Motor neuron (in vitro differentiated cells): ENCODE measurements at regions of chr2 and their contacts with region 1.

Region 1: DNA sequence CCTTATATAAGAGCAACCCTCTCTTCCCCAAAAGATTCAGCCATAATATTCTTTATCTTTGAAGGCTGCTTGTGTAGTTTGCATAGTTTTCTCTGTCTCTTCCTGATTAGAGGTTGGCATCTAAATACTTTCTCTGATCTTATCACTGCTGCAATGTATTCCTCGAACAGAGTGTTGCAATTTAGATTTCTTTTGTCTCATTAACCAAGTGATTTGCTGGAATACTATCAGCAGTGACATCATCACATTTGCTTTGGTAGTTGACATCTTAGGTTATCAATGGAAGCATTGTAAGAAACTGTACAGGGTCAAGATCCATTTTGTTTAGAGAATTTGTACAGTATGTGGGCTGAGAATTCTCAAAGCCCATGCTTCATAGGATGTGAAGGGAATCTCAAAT is 72.0 kb upstream of the NEUROD1 start:
- ATAC-seq: no peak
- H3K4me3 ChIP-seq: no peak overlapping the region
- H3K27ac ChIP-seq: no peak overlapping the region
- H3K4me1 ChIP-seq: peaks cover 5 to 7% of the 10 kb centered on the region in 2 donors

Region 2: DNA sequence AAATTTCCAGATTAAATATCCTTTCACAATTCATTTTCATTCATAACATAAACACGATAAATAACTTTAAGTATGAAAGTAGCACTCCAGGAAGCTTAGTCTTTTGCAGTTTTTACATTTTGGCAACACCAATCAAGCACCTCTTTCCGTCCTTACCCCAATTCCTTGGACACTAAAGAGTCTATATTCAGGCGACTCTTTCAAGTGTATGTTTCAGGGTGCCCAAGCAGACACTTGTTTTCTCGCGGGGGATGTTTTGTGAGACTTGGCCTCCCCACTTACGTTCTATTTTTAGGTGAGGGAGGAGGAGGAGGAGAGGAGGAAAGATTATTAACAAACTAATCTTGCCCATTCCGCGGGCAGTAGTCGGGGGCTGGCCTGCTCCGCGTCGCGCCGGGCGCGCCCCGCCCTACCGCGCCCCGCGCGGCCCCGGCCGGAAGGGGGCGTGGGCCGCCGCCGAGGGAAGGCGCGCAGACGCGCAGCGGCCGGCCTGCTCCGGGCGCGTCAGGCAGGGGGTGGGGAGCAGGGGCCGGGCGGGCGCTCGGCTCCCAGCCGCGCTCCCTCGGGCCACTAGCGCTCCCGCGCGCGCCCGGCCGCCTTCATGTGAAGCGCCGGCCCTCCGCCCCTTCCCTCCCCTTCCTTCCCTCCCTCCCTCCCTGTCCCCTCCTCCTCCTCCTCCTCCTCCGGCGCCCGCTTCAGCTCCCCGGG is 139.1 kb after region 1 on chr2 and contains the start of gene ITPRID2:
- in situ Hi-C with region 1: loop called in 2 of 9 experiments (anchors 10 to 25 kb)
- ATAC-seq: peak; percentile 87 to 93 (median 91)
- H3K4me3 ChIP-seq: peak within 1 kb of the TSS; percentile 67 to 88 (median 78)
- H3K27ac ChIP-seq: peak within 1 kb of the TSS; percentile 77 to 86
- H3K4me1 ChIP-seq: peaks cover 0 to 13% of the 10 kb centered on the region in 2 donors
- total RNA-seq, gene ITPRID2: 27.2 to 113 (median 35.9) TPM

Region 3: DNA sequence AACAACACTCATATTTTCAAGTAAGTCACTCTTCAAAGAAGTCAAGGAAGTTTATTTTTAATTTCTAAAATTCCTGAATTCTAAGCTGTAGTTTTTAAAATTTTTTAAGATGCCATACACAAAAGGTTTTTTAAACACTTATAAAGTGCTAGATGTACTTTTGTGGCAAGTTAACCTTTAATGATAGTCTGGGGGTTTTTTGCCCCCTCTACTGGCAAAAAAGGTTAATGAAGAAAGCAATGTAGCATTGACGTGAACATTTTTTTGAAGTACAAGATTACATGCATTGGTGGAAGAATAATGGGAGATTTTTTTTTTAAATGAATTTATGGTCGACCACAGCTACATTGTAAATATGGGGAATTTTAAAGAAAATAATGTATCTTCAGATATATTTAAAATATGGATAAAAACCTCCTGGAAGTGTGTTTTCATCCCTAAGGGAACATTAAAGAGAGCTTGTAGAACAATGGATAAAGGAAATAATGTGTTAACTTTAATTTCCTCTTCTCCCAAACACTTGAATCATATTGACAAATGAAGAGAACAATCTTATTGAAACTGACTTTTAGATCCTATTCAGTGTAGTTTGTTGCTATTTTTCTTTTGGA is 151.8 kb after region 1 on chr2:
- in situ Hi-C with region 1: loop called in 4 of 9 experiments (anchors 10 to 25 kb)
- ATAC-seq: peak in 1 of 8 experiments; percentile 44
- H3K4me3 ChIP-seq: no peak overlapping the region
- H3K27ac ChIP-seq: no peak overlapping the region
- H3K4me1 ChIP-seq: no peaks in the 10 kb centered on the region